OCI-LY7 (cell line): ENCODE measurements at regions of chr4 and their contacts with region 1.

Region 1: GRCh38 chr4:186191200-186192065 is at the start of gene CYP4V2:
- DNase-seq: peak; percentile 92
- H3K4me3 ChIP-seq: peak within 1 kb of the TSS; percentile 82
- H3K27ac ChIP-seq: peak within 1 kb of the TSS; percentile 91
- H3K4me1 ChIP-seq: peaks cover 27% of the 10 kb centered on the region
- CTCF ChIP-seq: peak; percentile 61
- total RNA-seq, gene CYP4V2: 6.2 and 6.9 TPM in 2 replicates

Region 2: DNA sequence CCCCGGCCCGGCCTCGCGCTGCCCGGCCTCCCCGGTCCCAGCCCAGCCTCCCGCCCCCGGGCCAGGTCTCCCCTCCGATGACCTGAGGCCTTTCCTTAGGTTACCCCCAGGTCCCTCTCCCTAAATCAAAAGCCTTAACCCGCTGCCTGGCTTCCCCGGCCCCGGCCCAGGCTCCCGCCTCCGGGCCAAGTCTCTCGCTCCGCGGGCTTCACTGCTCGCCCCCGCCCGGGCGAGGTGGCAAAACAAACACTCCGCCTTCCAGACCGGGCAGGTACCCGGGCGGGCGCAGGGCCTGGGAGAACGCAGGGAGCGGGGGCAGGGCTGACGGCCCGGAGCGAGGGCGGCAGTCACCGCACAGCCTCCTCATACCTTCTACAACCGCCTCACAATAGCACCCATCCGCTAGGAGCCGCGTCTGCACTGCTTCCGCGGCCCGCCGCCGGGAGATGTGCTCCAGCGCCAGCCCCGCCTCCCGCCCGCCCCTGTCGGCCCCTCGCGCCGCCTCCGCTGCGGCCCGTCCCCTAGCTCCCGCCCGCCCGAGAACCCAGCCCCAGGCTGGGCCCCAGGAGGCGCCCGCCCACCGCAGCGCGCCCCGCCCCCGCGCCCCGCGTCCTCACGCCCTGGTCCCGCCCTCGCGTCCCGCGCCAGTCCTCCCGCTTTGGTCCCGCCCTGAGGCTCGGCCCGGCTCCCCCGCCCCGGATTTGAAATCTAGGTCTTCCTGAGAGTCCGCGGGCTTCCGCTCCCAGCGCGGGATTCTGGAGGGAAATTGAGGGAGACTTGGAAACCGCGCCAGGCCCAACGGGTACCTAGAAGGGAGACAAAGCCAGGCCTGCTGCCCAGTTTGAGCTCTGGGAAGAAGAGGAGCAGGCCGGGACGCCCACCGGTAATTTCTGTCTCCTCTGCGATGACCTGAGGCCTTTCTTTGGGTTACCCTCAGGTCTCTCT is 1542.1 kb before region 1 on chr4 and contains the starts of genes CASP3 and PRIMPOL:
- CTCF ChIA-PET with region 1: no interaction called
- POLR2A ChIA-PET with region 1: no interaction called
- intact Hi-C with region 1: loop called (anchors 5 kb)
- DNase-seq: peak; percentile 96
- H3K4me3 ChIP-seq: peak within 1 kb of the TSS; percentile 93
- H3K27ac ChIP-seq: peak within 1 kb of the TSS; percentile 79
- H3K4me1 ChIP-seq: peaks cover 42% of the 10 kb centered on the region
- CTCF ChIP-seq: 0 out of 2 replicates have a peak, but pooled peaks have one; percentile 21
- total RNA-seq, gene CASP3: 25.8 and 29.5 TPM in 2 replicates
- total RNA-seq, gene PRIMPOL: 8.8 and 9.2 TPM in 2 replicates

Region 3: GRCh38 chr4:184745831-184746795 is 1445.3 kb before region 1 on chr4:
- CTCF ChIA-PET with region 1: no interaction called
- POLR2A ChIA-PET with region 1: no interaction called
- intact Hi-C with region 1: no loop called
- DNase-seq: peak; percentile 83
- H3K4me3 ChIP-seq: no peak overlapping the region
- H3K27ac ChIP-seq: no peak overlapping the region
- H3K4me1 ChIP-seq: peaks cover 9% of the 10 kb centered on the region
- CTCF ChIP-seq: peak; percentile 94

Region 4: DNA sequence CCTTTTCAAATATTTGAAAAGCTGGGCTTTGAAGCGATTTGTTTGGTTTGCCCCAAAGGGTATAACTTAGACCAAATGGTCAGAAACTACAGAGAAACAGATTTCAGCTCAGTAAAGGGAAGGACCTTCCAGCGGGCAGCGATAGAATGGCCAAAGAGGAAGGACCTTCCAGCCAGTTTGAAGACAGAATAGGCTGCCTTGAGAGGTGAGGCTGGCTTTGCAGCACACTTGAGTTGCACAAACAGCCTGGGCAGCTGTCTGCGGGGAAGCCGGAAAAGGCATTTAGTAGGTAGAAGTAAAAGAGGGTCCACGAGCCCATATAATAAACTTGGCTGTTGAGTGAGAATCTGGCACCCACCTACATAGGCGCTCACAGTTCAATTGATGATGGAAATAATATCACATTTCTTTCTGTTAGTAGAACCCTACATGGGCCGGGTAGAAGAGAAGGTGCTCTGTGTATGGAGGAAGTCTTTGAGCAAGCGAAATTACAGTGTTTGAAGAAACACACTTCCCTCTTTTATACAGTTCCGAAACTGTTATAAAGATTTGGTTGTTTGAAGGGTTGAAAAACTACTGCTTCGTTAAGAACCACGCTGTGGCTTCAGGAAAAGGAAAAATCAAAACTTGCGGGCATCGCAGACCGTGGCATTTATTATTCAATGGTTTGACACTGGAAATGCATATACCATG is 304.5 kb before region 1 on chr4:
- CTCF ChIA-PET with region 1: no interaction called
- POLR2A ChIA-PET with region 1: no interaction called
- intact Hi-C with region 1: loop called (anchors 10 kb)
- DNase-seq: peak; percentile 63
- H3K4me3 ChIP-seq: peak overlapping the region; percentile 7
- H3K27ac ChIP-seq: no peak overlapping the region
- H3K4me1 ChIP-seq: peaks cover 12% of the 10 kb centered on the region
- CTCF ChIP-seq: no peak

Region 5: DNA sequence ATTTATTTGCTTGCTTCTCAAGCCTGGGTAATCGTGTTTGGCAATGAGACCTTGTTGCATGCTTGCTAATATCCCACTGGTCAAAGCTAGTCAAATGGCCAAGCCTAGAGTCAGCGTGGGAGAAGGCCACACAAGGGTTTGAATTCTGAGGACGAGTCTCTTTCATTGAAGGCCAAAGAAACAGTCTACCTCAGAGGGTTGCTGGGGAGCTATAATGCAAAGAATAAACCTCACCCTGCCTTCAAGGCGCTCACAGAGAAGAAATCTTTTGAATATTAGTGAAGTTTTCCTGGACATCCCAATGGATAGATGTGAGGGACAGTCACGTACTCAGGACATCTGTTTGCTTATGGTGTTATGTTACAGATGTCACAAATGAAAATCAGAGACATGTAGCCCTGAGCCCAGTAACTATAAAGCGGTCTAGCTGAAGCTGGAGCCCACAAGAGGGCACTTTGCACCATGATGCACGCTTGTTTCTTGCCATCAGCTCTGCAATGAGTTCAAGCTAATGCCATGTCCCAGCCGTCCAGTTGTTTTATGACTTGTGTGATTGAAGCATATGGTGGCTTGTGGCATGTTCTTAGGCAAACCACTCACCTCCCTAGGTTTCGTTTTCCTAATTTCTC is 123.6 kb before region 1 on chr4:
- CTCF ChIA-PET with region 1: no interaction called
- POLR2A ChIA-PET with region 1: interaction called, 6 read pairs
- intact Hi-C with region 1: loop called (anchors 5 kb)
- DNase-seq: peak; percentile 62
- H3K4me3 ChIP-seq: no peak overlapping the region
- H3K27ac ChIP-seq: no peak overlapping the region
- H3K4me1 ChIP-seq: no peaks in the 10 kb centered on the region
- CTCF ChIP-seq: peak; percentile 69

Region 6: GRCh38 chr4:187103351-187103750 is 911.9 kb after region 1 on chr4:
- CTCF ChIA-PET with region 1: no interaction called
- POLR2A ChIA-PET with region 1: no interaction called
- intact Hi-C with region 1: loop called (anchors 10 kb)
- DNase-seq: peak; percentile 97
- H3K4me3 ChIP-seq: peak overlapping the region; percentile 37
- H3K27ac ChIP-seq: peak overlapping the region; percentile 98
- H3K4me1 ChIP-seq: peaks cover 93% of the 10 kb centered on the region
- CTCF ChIP-seq: no peak